ENCODE measurements at regions of chr11 and their contacts with region 1.

Region 1: DNA sequence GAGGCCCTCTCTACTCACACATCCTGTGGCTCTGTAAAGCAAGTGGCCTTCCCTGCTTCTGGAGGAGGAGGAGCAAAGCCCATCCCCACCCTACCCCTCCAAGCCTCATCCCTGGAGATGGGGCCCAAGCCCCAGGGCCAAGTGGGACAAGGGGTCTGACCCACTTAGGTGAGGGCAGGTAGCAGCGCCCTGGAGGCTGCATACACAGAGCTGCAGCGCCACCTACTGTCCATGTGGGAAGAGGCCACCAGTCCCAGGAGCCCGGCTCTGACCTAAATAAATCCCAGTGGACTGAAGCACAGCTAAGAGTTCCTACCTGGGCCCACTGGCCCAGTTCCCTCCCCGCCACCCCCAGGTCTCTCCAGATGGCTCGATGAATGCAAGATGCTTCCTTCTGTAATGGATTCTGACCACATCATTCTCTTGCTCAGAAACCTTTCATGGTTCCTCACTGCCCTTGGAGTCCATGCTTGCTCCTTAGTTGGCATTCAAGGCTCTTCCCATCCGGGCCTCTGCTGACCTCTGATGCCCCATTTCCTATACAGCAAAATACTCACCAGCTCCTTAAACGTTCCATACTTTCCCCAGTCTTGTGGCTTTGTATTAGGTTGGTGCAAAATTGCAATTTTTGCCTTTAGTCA is 62.1 kb downstream of the THAP12 start:
- DNase-seq: peak; percentile 91
- ATAC-seq: peak; percentile 86
- H3K4me3 Mint-ChIP-seq: no peak overlapping the region
- H3K27ac Mint-ChIP-seq: no peak overlapping the region
- H3K4me1 Mint-ChIP-seq: peaks cover 9% of the 10 kb centered on the region
- H3K27me3 Mint-ChIP-seq: peaks cover 30% of the 10 kb centered on the region

Region 2: DNA sequence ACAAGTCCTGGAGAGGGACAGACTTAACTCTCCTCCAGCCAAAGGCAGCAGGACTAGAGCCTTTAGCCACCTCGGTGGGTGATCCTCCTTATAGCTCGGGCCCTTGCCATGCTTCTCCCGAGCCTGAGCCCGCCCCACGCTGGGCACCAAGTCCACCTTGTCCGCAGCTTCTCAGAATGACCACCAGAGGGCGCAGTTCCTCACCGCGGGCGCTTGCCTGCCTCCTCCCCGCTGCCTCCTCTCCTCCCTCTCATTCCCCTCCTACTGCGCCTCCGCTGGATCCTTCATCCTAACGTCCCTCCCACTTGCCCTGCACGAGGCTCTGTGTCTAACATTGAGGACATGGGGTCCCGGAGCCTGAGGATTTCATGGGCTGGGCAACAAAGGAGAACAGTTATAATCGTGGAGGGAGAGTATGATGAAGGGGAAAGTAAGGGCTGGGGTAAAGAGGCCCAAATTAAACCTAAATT is 612.6 kb before region 1 on chr11:
- CTCF ChIA-PET with region 1: interaction called, 3 read pairs
- POLR2A ChIA-PET with region 1: no interaction called
- intact Hi-C with region 1: loop called in 1 of 2 experiments (anchors 1 kb)
- DNase-seq: peak; percentile 82
- ATAC-seq: peak; percentile 96
- H3K4me3 Mint-ChIP-seq: no peak overlapping the region
- H3K27ac Mint-ChIP-seq: no peak overlapping the region
- H3K4me1 Mint-ChIP-seq: peaks cover 10% of the 10 kb centered on the region
- H3K27me3 Mint-ChIP-seq: peaks cover 9% of the 10 kb centered on the region

Region 3: GRCh38 chr11:75721855-75722668 is 596.8 kb before region 1 on chr11:
- CTCF ChIA-PET with region 1: no interaction called
- POLR2A ChIA-PET with region 1: no interaction called
- intact Hi-C with region 1: loop called in 1 of 2 experiments (anchors 5 kb)
- DNase-seq: no peak
- ATAC-seq: no peak
- H3K4me3 Mint-ChIP-seq: no peak overlapping the region
- H3K27ac Mint-ChIP-seq: no peak overlapping the region
- H3K4me1 Mint-ChIP-seq: no peaks in the 10 kb centered on the region
- H3K27me3 Mint-ChIP-seq: no peaks in the 10 kb centered on the region

Region 4: GRCh38 chr11:75802913-75803820 is 515.7 kb before region 1 on chr11:
- CTCF ChIA-PET with region 1: interaction called, 3 read pairs
- POLR2A ChIA-PET with region 1: no interaction called
- intact Hi-C with region 1: loop called in 1 of 2 experiments (anchors 2 kb)
- DNase-seq: peak; percentile 84
- ATAC-seq: peak; percentile 92
- H3K4me3 Mint-ChIP-seq: no peak overlapping the region
- H3K27ac Mint-ChIP-seq: no peak overlapping the region
- H3K4me1 Mint-ChIP-seq: peaks cover 10% of the 10 kb centered on the region
- H3K27me3 Mint-ChIP-seq: no peaks in the 10 kb centered on the region

Region 5: GRCh38 chr11:75896843-75897419 is 421.9 kb before region 1 on chr11:
- CTCF ChIA-PET with region 1: interaction called, 4 read pairs
- POLR2A ChIA-PET with region 1: no interaction called
- intact Hi-C with region 1: loop called (anchors 1 to 2 kb)
- DNase-seq: no peak
- ATAC-seq: no peak
- H3K4me3 Mint-ChIP-seq: no peak overlapping the region
- H3K27ac Mint-ChIP-seq: no peak overlapping the region
- H3K4me1 Mint-ChIP-seq: peaks cover 27% of the 10 kb centered on the region
- H3K27me3 Mint-ChIP-seq: no peaks in the 10 kb centered on the region

Region 6: GRCh38 chr11:76207642-76208401 is 111.0 kb before region 1 on chr11:
- CTCF ChIA-PET with region 1: interaction called, 66 read pairs
- POLR2A ChIA-PET with region 1: interaction called, 3 read pairs
- intact Hi-C with region 1: loop called (anchors 1 kb)
- DNase-seq: peak; percentile 87
- ATAC-seq: peak; percentile 76
- H3K4me3 Mint-ChIP-seq: peak overlapping the region; percentile 60
- H3K27ac Mint-ChIP-seq: no peak overlapping the region
- H3K4me1 Mint-ChIP-seq: peaks cover 15% of the 10 kb centered on the region
- H3K27me3 Mint-ChIP-seq: peaks cover 55% of the 10 kb centered on the region

Measured in activated CD4-positive, alpha-beta T cell treated with anti-CD3 and anti-CD28 coated beads for 36 hours (primary cell).